GM13976 (cell line): ENCODE measurements at regions of chr1 and their contacts with region 1.

Region 1: DNA sequence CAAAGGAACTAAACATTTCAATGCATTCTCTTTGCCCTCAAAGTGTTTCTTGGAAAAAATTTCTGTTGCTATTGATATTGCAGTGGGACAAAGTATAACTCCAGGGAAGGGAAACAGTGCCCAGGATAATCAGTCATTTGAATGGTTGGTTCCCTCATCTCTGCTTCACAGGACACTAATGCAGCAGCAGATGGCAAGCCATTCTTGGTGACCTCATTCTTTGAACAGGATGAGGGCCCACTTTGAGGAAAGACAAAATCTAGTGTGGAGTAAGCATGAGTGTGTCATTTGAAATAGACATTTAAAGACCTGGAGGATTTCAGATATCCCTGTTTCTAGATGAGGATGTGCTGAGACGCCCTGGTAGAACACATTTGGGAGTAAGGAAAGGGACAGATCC is 32.3 kb downstream of the CHRM3 start:
- DNase-seq: no peak
- CTCF ChIP-seq: no peak

Region 2: DNA sequence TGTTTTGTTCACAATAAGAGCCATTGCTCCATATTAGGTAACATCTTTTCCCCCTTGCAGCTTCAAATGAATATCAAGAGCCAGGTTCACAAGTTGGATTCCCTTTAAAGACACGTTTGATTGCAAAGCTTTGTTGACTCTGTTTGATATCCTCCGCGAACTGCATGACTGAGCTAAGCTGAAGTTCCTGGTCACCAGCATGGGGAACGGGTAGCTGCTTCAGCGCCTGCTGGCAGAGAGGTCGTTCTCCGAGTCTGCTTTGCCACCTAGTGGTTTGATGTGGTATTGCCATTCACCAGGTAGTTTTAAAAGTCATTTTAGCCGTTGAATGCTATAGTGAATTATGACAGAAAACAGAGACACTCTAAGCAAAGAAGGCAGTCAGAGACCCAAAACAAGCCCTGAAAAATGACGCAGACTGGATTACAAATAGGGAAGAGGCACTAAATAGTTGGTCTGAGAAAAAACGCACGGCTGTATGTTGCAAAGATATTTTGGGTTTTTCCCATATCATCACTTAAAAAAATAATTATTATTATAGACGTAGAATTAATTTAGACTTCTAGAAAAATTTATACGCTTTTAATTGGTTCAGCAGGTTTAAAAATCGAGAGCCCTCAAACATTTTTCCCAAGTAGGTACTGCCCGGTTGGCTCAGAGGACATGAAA is 479.5 kb after region 1 on chr1:
- in situ Hi-C with region 1: loop called (anchors 25 kb)
- DNase-seq: peak; percentile 65
- CTCF ChIP-seq: peak; percentile 79